Transverse colon (tissue), 4 donors: ENCODE measurements at regions of chr17 and their contacts with region 1.

Region 1: GRCh38 chr17:41966463-41967140 is at the start of gene CNP:
- DNase-seq: peak; percentile 94
- H3K4me3 ChIP-seq: peak within 1 kb of the TSS; percentile 85 to 93 (median 90)
- H3K27ac ChIP-seq: peak within 1 kb of the TSS; percentile 91 to 96 (median 94)
- H3K4me1 ChIP-seq: peaks cover 7 to 33% (median 21%) of the 10 kb centered on the region in 4 donors
- H3K27me3 ChIP-seq: no peaks in the 10 kb centered on the region
- CTCF ChIP-seq: no peak
- EP300 ChIP-seq: no peak
- POLR2A ChIP-seq: peak; percentile 78
- total RNA-seq, gene CNP: 32.6 to 133 (median 54.2) TPM

Region 2: DNA sequence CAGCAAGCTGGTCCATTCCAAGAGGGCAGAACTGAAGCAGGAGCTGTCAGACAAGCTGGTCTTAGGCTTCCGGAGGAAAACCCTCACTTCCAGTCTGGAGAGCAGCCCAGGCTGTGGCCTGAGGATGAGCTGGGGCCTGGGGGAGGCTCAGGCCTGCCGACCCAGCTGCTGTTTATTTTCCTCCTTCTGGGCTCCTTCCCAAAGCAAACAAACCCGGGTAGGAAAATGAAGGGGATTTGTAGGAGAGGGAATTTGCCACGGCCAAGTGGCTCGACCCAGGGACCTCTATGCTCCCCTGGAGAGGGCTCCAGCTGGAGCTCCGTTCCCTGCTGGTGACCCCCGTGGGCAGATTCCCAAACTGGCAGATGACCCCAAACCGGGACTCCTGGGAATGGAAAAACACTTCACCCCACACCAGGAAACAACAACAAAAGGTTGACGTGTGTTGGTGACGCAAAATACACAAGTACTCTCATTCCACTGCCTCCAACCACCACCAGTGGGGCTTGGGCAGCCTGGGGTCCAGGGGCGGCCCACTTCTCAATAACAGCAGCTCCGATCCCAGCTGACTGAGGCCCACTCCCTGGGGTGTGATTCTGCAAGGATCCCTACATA is 188.9 kb before region 1 on chr17:
- in situ Hi-C with region 1: no loop called
- intact Hi-C with region 1: no loop called
- DNase-seq: peak; percentile 67
- H3K4me3 ChIP-seq: peak overlapping the region in 1 of 4 donors; percentile 3
- H3K27ac ChIP-seq: peak overlapping the region; percentile 91 to 96 (median 92)
- H3K4me1 ChIP-seq: peaks cover 60 to 85% (median 77%) of the 10 kb centered on the region in 4 donors
- H3K27me3 ChIP-seq: no peaks in the 10 kb centered on the region
- CTCF ChIP-seq: peak in 2 of 5 experiments; percentile 28 to 29
- EP300 ChIP-seq: no peak
- POLR2A ChIP-seq: no peak

Region 3: GRCh38 chr17:42019509-42020404 is 53.2 kb after region 1 on chr17 and contains the start of gene NKIRAS2:
- in situ Hi-C with region 1: no loop called
- intact Hi-C with region 1: loop called (anchors 10 kb)
- DNase-seq: peak; percentile 96
- H3K4me3 ChIP-seq: peak within 1 kb of the TSS; percentile 85 to 97 (median 92)
- H3K27ac ChIP-seq: peak within 1 kb of the TSS; percentile 85 to 94 (median 90)
- H3K4me1 ChIP-seq: peaks cover 28 to 53% (median 43%) of the 10 kb centered on the region in 4 donors
- H3K27me3 ChIP-seq: no peaks in the 10 kb centered on the region
- CTCF ChIP-seq: peak; percentile 92 to 95 (median 95)
- EP300 ChIP-seq: no peak
- POLR2A ChIP-seq: peak; percentile 71
- total RNA-seq, gene NKIRAS2: 20.5 to 52.7 (median 35.0) TPM